ENCODE measurements at regions of chr4 and their contacts with region 1.

Region 1: DNA sequence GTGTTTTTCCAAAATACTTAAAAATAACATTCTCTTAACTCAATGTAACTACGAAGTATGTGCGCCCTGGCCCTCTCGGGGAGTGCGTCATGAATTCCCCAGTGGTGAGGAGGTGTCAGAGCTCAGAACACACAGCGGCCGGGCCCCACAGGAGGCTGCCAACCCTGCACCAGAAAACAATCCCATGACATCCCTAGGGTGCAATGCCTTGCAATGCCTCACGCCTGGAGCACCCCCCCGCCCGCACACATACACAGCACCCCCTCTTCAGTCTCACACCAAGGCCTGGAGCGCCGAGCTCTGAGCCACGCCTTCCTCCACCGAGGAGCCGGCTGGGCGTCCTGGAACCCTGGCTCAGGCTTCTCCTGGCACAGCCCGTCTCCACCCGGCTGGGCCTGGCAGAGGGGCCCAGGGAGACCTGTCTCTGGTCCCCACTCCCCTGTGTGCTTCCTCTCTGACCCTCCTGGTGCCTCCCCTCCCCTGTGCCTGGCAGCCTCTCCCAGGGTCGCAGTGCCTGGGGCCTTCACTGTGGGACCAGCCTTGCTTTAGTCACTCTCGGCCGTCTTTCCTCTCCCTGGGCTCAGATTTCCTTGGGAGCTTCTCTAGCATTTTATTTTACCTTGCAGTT is 108.2 kb upstream of the ADRA2C start:
- DNase-seq: peak; percentile 84 to 92
- ATAC-seq: peak; percentile 81
- H3K4me3 ChIP-seq: no peak overlapping the region
- H3K27ac ChIP-seq: peak overlapping the region; percentile 64 to 89
- H3K4me1 ChIP-seq: peaks cover 0 to 4% of the 10 kb centered on the region in 2 donors
- H3K27me3 ChIP-seq: no peaks in the 10 kb centered on the region

Region 2: GRCh38 chr4:3497523-3498389 is 160.3 kb before region 1 on chr4:
- intact Hi-C with region 1: no loop called
- DNase-seq: no peak
- ATAC-seq: no peak
- H3K4me3 ChIP-seq: no peak overlapping the region
- H3K27ac ChIP-seq: no peak overlapping the region
- H3K4me1 ChIP-seq: no peaks in the 10 kb centered on the region
- H3K27me3 ChIP-seq: no peaks in the 10 kb centered on the region

Region 3: GRCh38 chr4:3729188-3729875 is 71.3 kb after region 1 on chr4:
- intact Hi-C with region 1: loop called in 1 of 2 experiments (anchors 5 kb)
- DNase-seq: peak in 1 of 2 donors; percentile 67
- ATAC-seq: peak; percentile 51
- H3K4me3 ChIP-seq: no peak overlapping the region
- H3K27ac ChIP-seq: peak overlapping the region; percentile 9 to 22
- H3K4me1 ChIP-seq: no peaks in the 10 kb centered on the region
- H3K27me3 ChIP-seq: no peaks in the 10 kb centered on the region

Region 4: GRCh38 chr4:3753726-3754412 is 95.9 kb after region 1 on chr4:
- intact Hi-C with region 1: no loop called
- DNase-seq: no peak
- ATAC-seq: no peak
- H3K4me3 ChIP-seq: no peak overlapping the region
- H3K27ac ChIP-seq: no peak overlapping the region
- H3K4me1 ChIP-seq: no peaks in the 10 kb centered on the region
- H3K27me3 ChIP-seq: no peaks in the 10 kb centered on the region

Region 5: GRCh38 chr4:3765271-3766040 is 107.4 kb after region 1 on chr4:
- intact Hi-C with region 1: loop called (anchors 5 kb)
- DNase-seq: peak; percentile 80 to 90
- ATAC-seq: peak; percentile 65
- H3K4me3 ChIP-seq: peak overlapping the region; percentile 65 to 70
- H3K27ac ChIP-seq: peak overlapping the region; percentile 38 to 94
- H3K4me1 ChIP-seq: no peaks in the 10 kb centered on the region
- H3K27me3 ChIP-seq: no peaks in the 10 kb centered on the region

Region 6: GRCh38 chr4:3801931-3802550 is 144.0 kb after region 1 on chr4:
- intact Hi-C with region 1: no loop called
- DNase-seq: peak; percentile 17 to 45
- ATAC-seq: no peak
- H3K4me3 ChIP-seq: no peak overlapping the region
- H3K27ac ChIP-seq: no peak overlapping the region
- H3K4me1 ChIP-seq: no peaks in the 10 kb centered on the region
- H3K27me3 ChIP-seq: no peaks in the 10 kb centered on the region